GM12878 (cell line): ENCODE measurements at regions of chr3 and their contacts with region 1.

Region 1: GRCh38 chr3:99808151-99808794 is 9.4 kb upstream of the CMSS1 start:
- DNase-seq: no peak
- ATAC-seq: peak; percentile 58
- H3K4me3 ChIP-seq: no peak overlapping the region
- H3K27ac ChIP-seq: no peak overlapping the region
- H3K4me1 ChIP-seq: no peaks in the 10 kb centered on the region
- H3K27me3 ChIP-seq: no peaks in the 10 kb centered on the region
- CTCF ChIP-seq: peak; percentile 71 to 84 (median 79)
- EP300 ChIP-seq: no peak
- POLR2A ChIP-seq: no peak
- RAD21 ChIP-seq: peak; percentile 63

Region 2: DNA sequence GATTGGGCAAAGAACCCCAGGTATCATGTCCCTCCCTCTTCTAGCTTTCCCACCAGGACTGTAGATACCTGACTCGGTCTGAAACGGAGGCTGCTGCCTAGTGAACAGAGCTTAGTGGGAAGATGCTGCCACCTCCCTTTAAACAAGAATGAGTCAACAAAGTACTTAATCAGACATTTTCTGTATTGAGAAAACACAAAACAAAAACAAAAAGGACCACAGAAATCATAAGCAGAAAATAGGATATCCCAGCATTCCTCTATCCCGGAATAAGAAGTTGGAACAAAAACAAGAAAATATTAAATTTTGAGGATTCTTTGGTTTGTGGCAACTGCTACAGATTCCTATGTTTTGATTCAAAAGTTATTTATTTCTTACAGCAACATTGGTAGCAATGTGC is 221.6 kb before region 1 on chr3:
- CTCF ChIA-PET with region 1: no interaction called
- POLR2A ChIA-PET with region 1: no interaction called
- RAD21 ChIA-PET with region 1: no interaction called
- SMC1A ChIA-PET with region 1: no interaction called
- in situ Hi-C with region 1: no loop called
- intact Hi-C with region 1: no loop called
- DNase-seq: no peak
- ATAC-seq: no peak
- H3K4me3 ChIP-seq: no peak overlapping the region
- H3K27ac ChIP-seq: no peak overlapping the region
- H3K4me1 ChIP-seq: no peaks in the 10 kb centered on the region
- H3K27me3 ChIP-seq: no peaks in the 10 kb centered on the region
- CTCF ChIP-seq: no peak; a peak in 1 of 6 replicates
- EP300 ChIP-seq: no peak
- POLR2A ChIP-seq: no peak
- RAD21 ChIP-seq: no peak

Region 3: DNA sequence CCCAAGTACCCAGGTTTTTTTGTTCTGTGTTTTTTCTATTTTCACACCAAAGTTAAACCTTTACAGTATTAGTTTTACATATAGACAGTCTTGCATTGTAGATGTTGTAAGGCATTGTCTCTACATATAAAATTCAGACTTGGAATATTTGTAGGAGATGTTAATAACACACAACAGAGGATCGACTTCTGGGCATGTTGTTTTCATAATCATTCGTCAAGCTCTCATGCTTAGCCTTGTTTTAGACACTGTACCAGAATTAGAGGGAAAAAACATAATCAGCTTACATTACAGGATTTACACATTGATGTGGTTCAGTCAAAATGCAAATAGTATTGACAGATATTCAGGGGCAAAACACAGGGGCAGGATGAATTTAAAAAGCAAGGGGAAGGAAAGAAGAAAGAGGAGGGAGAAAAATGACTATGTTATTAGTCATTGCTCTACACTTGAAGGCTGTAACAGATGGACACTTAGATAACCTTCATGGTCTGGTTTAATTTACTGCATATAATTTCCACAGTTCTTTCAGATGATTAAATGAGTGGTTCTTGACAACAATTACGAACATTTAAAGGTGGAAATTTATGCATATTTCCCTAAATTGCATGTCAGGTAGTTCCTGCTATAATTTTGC is 16.8 kb after region 1 on chr3:
- CTCF ChIA-PET with region 1: interaction called, 10 read pairs
- POLR2A ChIA-PET with region 1: no interaction called
- RAD21 ChIA-PET with region 1: no interaction called
- SMC1A ChIA-PET with region 1: interaction called, 5 read pairs
- in situ Hi-C with region 1: no loop called
- intact Hi-C with region 1: no loop called
- DNase-seq: no peak
- ATAC-seq: no peak; the same call in 2 of the 3 replicates
- H3K4me3 ChIP-seq: no peak overlapping the region
- H3K27ac ChIP-seq: no peak overlapping the region
- H3K4me1 ChIP-seq: no peaks in the 10 kb centered on the region
- H3K27me3 ChIP-seq: no peaks in the 10 kb centered on the region
- CTCF ChIP-seq: no peak
- EP300 ChIP-seq: no peak
- POLR2A ChIP-seq: no peak
- RAD21 ChIP-seq: no peak